ENCODE measurements at regions of chr18 and their contacts with region 1.

Region 1: GRCh38 chr18:63410792-63411191 is 11.5 kb downstream of the VPS4B start:
- DNase-seq: no peak
- ATAC-seq: no peak

Region 2: DNA sequence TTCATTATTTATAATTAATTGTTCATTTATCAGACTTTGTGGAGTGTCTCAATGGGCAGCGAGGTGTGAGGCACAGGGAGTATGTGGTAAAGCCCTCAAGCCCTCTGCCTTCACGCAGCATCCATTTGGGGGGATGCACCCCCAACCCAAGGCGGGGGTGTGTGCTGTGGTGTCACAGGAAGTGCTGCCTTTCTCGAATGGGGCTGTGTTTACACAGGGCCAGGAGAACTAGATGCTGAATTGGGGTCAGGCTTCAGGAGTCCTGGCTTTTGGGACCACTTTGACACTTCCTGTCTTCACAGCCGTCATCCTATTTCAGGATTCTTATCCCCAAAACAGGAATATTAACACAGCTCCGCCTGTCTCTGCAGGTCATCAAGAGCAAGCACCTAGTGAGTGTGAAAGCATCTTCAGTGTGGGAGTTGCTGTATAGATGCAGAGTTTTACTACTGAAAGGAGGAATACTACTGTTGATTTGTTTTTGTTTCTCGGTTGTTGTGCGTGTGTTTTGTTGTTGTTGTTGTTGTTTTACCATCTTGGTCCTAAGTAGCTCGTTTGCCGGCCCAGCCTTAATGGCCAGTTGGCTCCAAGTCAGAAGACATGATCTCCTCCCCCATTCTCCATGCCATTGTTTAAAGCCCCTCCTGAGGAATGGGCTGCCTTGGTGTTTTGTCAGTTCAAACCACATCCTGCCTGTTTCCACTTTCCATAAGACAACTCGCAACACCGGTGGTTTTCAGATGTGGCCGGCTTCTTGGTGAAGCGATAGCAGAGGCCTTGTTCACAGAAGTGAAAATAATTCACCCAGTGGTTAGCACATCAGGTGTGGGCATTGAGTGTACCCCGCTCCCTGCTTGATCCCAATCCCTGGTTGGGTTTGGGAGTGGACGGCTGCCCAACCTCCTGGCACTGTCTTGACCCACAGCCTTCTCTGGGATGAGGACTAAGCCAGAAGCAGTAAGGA is 312.5 kb before region 1 on chr18:
- intact Hi-C with region 1: no loop called
- DNase-seq: no peak
- ATAC-seq: no peak

Region 3: DNA sequence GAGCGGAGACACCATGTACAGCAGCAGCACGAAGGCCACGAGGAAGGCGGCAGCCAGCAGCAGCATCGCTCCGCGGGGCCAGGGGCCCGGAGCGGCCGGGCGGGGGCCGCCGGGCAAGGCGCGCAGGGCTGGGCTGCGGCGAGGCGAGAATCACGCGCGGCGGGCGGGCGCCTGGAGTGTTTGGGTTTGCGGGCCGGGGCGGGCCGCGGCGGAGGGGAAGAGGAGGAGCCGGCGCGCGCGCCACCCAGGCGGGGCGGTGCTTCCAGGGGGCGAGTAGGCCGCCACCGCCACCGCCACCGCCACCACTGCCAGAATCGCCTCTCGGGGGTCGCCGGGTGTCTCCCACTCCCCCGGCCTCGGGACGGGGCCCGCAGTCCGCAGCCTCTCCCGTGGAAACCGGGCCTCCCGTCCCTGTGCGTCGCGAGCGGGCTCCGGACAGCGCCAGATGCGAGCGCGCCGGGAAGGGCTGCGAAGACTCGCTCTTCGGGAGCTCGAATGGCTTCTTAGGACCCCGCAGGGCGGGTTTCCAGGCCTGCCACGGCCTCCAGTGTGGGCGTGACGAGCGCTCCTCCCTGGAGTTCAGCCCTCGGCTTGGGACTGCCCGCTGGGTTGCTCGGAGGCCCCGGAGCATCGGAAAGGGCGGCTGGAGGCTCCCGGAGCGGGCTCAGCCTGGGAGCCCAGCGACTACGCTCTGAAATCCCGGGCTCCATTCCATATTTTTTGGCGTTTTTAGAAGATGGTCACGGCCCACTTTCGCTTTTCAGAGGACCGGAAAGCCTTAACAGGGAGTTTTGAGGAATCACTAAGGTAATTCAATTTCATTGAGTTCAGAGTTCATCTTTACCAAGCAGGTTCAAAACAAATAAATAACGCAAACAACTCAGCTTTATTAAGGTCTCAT is 43.5 kb before region 1 on chr18 and contains the start of gene KDSR:
- intact Hi-C with region 1: loop called (anchors 10 kb)
- DNase-seq: peak; percentile 97
- ATAC-seq: peak; percentile 99
- total RNA-seq, gene KDSR: 118 TPM

Measured in sciatic nerve (tissue), 2 donors.